ENCODE measurements at regions of chr3 and their contacts with region 1.

Region 1: DNA sequence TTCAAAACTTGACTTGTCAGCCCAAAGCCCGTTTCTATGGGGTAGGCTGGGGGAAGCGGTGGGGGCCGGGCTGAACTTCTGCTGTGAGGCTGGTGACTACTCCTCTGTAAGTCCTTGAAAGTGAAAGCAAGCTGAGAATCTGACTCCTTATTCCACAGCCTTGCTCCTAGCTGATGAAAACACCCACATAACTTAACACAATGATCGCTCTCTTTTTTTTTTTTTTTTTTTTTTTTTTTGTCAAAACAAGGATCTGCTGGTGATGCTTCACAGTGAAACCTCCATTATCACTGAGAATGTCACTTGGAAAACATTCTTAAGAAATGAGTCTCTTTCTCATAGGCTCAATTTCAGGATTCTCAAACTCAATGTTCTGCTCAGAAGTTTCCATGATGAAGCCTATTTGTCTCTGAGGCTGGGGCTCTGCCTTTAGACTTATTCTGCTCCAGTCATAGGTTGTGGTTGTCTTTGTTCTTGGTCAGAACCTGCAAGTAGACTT is 31.4 kb upstream of the TKT start:
- DNase-seq: no peak
- ATAC-seq: no peak
- H3K4me3 Mint-ChIP-seq: no peak overlapping the region
- H3K27ac Mint-ChIP-seq: no peak overlapping the region
- H3K4me1 Mint-ChIP-seq: no peaks in the 10 kb centered on the region
- H3K27me3 Mint-ChIP-seq: no peaks in the 10 kb centered on the region

Region 2: DNA sequence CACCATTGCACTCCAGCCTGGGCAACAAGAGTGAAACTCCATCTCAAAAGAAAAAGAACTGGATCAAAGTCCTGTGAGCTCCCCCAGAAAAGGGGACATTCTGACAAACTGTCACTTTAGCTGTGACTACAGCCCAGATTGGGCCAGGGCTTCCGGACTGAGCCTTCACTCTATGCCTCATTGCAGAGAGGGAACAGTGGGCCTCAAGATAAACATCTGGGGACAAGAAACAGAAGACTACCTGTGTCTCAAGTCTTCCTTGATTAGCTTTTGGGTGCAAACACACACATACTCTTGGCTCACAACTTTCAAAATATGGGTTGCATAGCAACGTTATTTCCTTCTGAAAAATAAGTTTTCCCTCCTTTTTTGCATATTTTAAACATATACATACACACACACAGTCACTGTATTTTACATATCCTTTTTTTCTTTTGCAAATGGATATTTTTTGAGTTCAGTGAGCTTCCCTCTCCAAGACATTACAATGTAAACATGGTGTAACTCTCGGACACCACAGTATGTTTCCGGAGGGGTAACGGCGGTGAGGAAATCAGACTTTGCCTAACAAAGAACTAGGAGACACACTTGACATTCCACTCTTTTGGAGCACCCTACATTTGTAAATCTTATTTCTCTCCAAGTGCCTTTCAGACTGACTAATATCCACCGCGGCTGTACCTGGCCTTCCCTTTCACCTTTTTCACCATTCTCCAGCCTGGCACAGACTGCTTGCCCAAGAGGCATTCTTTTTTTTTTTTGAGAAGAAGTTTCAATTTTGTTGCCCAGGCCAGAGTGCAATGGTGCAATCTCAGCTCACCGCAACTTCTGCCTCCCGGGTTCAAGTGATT is 34.9 kb before region 1 on chr3:
- CTCF ChIA-PET with region 1: no interaction called
- DNase-seq: no peak
- ATAC-seq: no peak
- H3K4me3 Mint-ChIP-seq: peak overlapping the region; percentile 15
- H3K27ac Mint-ChIP-seq: peak overlapping the region; percentile 60
- H3K4me1 Mint-ChIP-seq: peaks cover 64% of the 10 kb centered on the region
- H3K27me3 Mint-ChIP-seq: no peaks in the 10 kb centered on the region

Region 3: DNA sequence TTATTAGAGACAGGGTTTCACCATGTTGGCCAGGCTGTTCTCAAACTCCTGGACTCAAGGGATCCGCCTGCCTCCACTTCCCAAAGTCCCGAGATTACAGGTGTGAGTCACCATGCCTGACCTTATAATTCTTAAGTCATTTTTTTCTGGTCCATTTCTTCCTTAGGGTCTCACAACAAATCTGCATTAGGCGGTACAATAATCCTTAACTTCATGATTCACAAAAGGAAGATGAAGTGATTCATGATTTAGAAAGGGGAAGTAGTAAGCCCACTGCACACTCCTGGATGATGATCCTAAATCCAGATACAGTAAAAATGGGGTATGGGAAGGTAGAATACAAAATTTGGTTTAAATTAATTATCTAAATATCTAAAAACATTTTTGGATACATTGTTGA is 13.6 kb after region 1 on chr3:
- CTCF ChIA-PET with region 1: interaction called, 13 read pairs
- DNase-seq: no peak
- ATAC-seq: no peak
- H3K4me3 Mint-ChIP-seq: no peak overlapping the region
- H3K27ac Mint-ChIP-seq: no peak overlapping the region
- H3K4me1 Mint-ChIP-seq: no peaks in the 10 kb centered on the region
- H3K27me3 Mint-ChIP-seq: no peaks in the 10 kb centered on the region

Region 4: GRCh38 chr3:53493963-53494791 is 207.0 kb after region 1 on chr3 and contains the start of gene CACNA1D:
- CTCF ChIA-PET with region 1: no interaction called
- DNase-seq: no peak
- ATAC-seq: peak; percentile 16
- H3K4me3 Mint-ChIP-seq: no peak within 1 kb of the TSS
- H3K27ac Mint-ChIP-seq: no peak within 1 kb of the TSS
- H3K4me1 Mint-ChIP-seq: peaks cover 6% of the 10 kb centered on the region
- H3K27me3 Mint-ChIP-seq: peaks cover 72% of the 10 kb centered on the region
- total RNA-seq, gene CACNA1D: 0.41 to 1.5 TPM

Measured in activated CD8-positive, alpha-beta memory T cell treated with anti-CD3 and anti-CD28 coated beads, Interleukin-2, amount 10 ng/mL, durations not matched to agents 7 days and 5 days (primary cell).